Heart right ventricle (tissue), 16 donors: ENCODE measurements at regions of chr11 and their contacts with region 1.

Region 1: GRCh38 chr11:77187776-77188632 is 60.0 kb downstream of the MYO7A start:
- DNase-seq: peak; percentile 78 to 83
- ATAC-seq: peak; percentile 79 to 92 (median 86)
- H3K4me3 ChIP-seq: no peak overlapping the region
- H3K27ac ChIP-seq: no peak overlapping the region
- H3K4me1 ChIP-seq: no peaks in the 10 kb centered on the region
- H3K27me3 ChIP-seq: no peaks in the 10 kb centered on the region
- CTCF ChIP-seq: peak; percentile 68 to 94 (median 91)

Region 2: DNA sequence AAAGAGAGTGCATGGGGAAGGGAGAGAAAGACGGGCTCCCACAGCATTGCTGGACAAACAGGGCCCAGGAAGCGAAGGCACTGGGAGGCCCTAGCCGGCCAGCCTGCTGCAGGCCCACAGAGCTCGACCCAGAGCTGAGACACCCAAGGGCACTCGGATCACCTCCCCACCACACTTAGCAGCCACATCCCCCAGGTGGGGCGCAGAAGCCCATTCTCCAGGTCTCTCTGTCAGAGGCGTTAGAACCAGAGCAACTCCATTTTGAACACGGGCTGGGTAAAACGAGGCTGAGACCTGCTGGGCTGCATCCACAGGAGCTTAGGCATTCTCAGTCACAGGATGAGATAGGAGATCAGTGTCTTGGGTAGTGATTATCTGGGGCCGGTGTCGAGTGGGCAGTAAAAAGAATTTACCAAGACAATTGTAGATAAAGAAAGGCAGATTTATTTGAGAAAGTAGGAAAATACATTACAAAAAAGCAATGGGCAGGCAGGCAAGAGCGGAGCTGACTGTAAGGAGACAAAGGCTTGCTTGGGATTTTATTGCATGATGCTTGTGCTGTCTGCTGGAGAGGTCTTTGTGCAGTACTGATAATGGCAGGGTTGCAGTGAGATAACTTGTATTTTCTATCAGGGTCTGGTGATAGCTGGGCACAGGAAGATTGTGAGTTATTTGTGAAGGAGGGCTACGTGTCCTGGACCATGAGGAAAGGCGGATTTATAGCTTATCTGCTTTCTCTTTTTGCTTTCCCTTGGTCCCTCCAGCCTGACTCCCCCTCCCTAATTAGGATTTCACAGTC is 134.6 kb before region 1 on chr11:
- intact Hi-C with region 1: loop called in 8 of 10 experiments (anchors 5 to 10 kb)
- DNase-seq: no peak
- ATAC-seq: no peak
- H3K4me3 ChIP-seq: no peak overlapping the region
- H3K27ac ChIP-seq: no peak overlapping the region
- H3K4me1 ChIP-seq: no peaks in the 10 kb centered on the region
- H3K27me3 ChIP-seq: no peaks in the 10 kb centered on the region
- CTCF ChIP-seq: no peak

Region 3: GRCh38 chr11:77127232-77127911 is 60.6 kb before region 1 on chr11:
- intact Hi-C with region 1: loop called (anchors 1 to 5 kb)
- DNase-seq: peak; percentile 35 to 67
- ATAC-seq: peak; percentile 62 to 86 (median 74)
- H3K4me3 ChIP-seq: peak overlapping the region in 9 of 10 donors; percentile 8 to 56 (median 46)
- H3K27ac ChIP-seq: peak overlapping the region in 4 of 10 donors; percentile 2 to 53 (median 32)
- H3K4me1 ChIP-seq: peaks cover 6 to 43% (median 27%) of the 10 kb centered on the region in 9 donors
- H3K27me3 ChIP-seq: peaks cover 0 to 9% (median 0%) of the 10 kb centered on the region in 7 donors
- CTCF ChIP-seq: peak; percentile 96 to 100 (median 99)

Region 4: GRCh38 chr11:77658213-77659013 is 470.4 kb after region 1 on chr11:
- intact Hi-C with region 1: no loop called
- DNase-seq: no peak
- ATAC-seq: no peak
- H3K4me3 ChIP-seq: no peak overlapping the region
- H3K27ac ChIP-seq: no peak overlapping the region
- H3K4me1 ChIP-seq: no peaks in the 10 kb centered on the region
- H3K27me3 ChIP-seq: no peaks in the 10 kb centered on the region
- CTCF ChIP-seq: no peak